ENCODE measurements at regions of chr6 and their contacts with region 1.

Region 1: DNA sequence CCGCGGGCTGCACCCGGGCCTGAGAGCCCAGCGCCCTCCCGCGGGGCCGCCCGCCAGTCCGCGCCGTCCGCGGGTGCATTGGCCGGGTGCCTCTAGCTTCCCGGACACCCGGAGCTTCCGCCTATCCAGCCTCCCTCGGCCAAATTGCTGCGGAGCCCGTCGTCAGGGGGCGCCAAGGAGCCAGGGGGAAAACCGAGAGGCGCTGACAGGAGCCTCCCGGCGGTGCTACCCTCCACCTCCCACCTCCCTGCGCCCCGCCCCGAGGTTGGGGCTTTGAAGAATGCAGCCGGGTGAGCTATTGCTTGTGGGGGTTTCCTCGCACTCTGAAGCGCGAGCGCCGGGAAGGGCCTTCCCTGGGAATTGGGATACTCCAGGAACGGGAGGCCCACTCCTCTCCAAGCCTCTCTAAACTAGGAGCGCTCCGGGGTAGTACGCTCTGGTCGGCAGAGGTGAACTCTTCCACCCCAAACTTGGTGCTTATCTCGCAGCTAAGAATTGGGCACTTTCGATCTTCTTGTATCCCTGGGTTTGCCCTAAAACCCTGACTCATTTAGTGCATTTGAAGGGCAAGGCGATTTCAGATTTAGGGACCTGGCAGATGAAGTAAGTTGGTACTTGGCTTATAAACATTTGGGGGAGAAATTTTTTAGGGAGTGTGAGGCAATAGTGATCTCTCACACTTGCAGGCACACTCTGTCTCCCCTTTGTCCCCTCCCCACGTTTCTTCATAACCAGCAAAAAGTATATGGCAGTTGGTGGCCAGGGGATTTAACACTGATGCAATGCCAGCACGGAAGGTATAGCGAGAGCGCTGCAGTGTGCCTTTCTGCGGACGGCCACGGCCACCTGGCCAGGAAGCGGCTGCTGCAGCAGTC is 501 bp downstream of the BEND6 start:
- DNase-seq: peak; percentile 96
- ATAC-seq: peak; percentile 72
- H3K4me3 ChIP-seq: peak overlapping the region; percentile 77
- H3K27ac ChIP-seq: peak overlapping the region; percentile 31
- H3K4me1 ChIP-seq: peaks cover 58% of the 10 kb centered on the region
- H3K27me3 ChIP-seq: no peaks in the 10 kb centered on the region
- CTCF ChIP-seq: peak; percentile 83

Region 2: GRCh38 chr6:56927538-56928453 is 27.6 kb before region 1 on chr6:
- CTCF ChIA-PET with region 1: no interaction called
- POLR2A ChIA-PET with region 1: no interaction called
- intact Hi-C with region 1: no loop called
- DNase-seq: peak; percentile 54
- ATAC-seq: peak; percentile 51; the same call in 1 of the 2 replicates
- H3K4me3 ChIP-seq: no peak overlapping the region
- H3K27ac ChIP-seq: no peak overlapping the region
- H3K4me1 ChIP-seq: peaks cover 17% of the 10 kb centered on the region
- H3K27me3 ChIP-seq: no peaks in the 10 kb centered on the region
- CTCF ChIP-seq: no peak

Region 3: GRCh38 chr6:57021086-57021720 is 65.8 kb after region 1 on chr6:
- CTCF ChIA-PET with region 1: interaction called, 5 read pairs
- POLR2A ChIA-PET with region 1: no interaction called
- intact Hi-C with region 1: loop called (anchors 2 kb)
- DNase-seq: peak; percentile 81
- ATAC-seq: peak; percentile 95
- H3K4me3 ChIP-seq: no peak overlapping the region
- H3K27ac ChIP-seq: no peak overlapping the region
- H3K4me1 ChIP-seq: no peaks in the 10 kb centered on the region
- H3K27me3 ChIP-seq: no peaks in the 10 kb centered on the region
- CTCF ChIP-seq: peak; percentile 70

Region 4: DNA sequence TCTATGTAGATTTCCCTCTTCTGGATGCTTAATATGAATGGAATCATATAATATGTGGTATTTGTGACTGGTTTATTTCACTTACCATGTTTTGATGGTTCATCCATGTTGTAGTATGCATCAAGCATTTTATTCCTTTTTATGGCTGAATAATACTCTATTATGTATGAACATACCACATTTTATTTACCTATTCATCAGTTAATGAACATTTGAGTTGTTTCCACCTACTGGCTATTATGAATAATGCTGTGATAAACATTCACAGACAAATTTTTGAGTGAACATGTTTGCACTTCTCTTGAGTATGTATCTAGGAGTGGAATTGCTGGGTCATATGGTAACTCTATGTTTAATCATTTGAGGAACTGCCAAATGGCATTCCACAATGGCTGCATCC is 119.7 kb after region 1 on chr6:
- CTCF ChIA-PET with region 1: no interaction called
- POLR2A ChIA-PET with region 1: no interaction called
- intact Hi-C with region 1: no loop called
- DNase-seq: peak; percentile 22
- ATAC-seq: no peak
- H3K4me3 ChIP-seq: no peak overlapping the region
- H3K27ac ChIP-seq: no peak overlapping the region
- H3K4me1 ChIP-seq: no peaks in the 10 kb centered on the region
- H3K27me3 ChIP-seq: no peaks in the 10 kb centered on the region
- CTCF ChIP-seq: peak; percentile 24; the same call in 1 of the 2 replicates

Region 5: DNA sequence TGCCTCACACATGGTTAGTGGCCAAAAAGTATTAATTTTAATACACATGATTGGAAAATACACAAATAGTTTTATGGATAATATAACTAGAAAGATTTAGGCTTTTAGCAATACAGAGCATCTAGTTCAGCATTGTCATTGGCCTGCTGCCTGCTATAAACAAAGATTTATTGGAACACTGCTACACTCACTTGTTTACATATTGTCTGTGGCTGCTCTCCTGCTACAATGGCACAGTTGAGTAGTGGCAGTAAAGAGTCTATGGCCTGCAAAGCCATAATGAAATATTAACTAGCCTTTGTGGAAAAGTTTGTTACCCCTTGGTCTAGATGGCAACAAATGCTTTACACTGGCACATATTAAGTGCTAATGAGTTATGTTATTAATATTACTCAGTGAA is 172.4 kb after region 1 on chr6:
- CTCF ChIA-PET with region 1: no interaction called
- POLR2A ChIA-PET with region 1: no interaction called
- intact Hi-C with region 1: loop called (anchors 1 kb)
- DNase-seq: peak; percentile 6
- ATAC-seq: peak; percentile 79
- H3K4me3 ChIP-seq: no peak overlapping the region
- H3K27ac ChIP-seq: no peak overlapping the region
- H3K4me1 ChIP-seq: no peaks in the 10 kb centered on the region
- H3K27me3 ChIP-seq: no peaks in the 10 kb centered on the region
- CTCF ChIP-seq: no peak

Region 6: GRCh38 chr6:57267586-57268293 is 312.3 kb after region 1 on chr6:
- CTCF ChIA-PET with region 1: no interaction called
- POLR2A ChIA-PET with region 1: no interaction called
- intact Hi-C with region 1: no loop called
- DNase-seq: peak; percentile 97
- ATAC-seq: peak; percentile 96
- H3K4me3 ChIP-seq: no peak overlapping the region
- H3K27ac ChIP-seq: peak overlapping the region; percentile 70
- H3K4me1 ChIP-seq: peaks cover 40% of the 10 kb centered on the region
- H3K27me3 ChIP-seq: no peaks in the 10 kb centered on the region
- CTCF ChIP-seq: peak; percentile 90